PC-3 (cell line): ENCODE measurements at regions of chr11 and their contacts with region 1.

Region 1: GRCh38 chr11:86919557-86920210 is 35.5 kb downstream of the FZD4 start:
- DNase-seq: peak; percentile 88
- ATAC-seq: peak; percentile 48
- H3K4me3 ChIP-seq: no peak overlapping the region
- H3K27ac ChIP-seq: peak overlapping the region; percentile 29
- H3K4me1 ChIP-seq: peaks cover 35% of the 10 kb centered on the region
- H3K27me3 ChIP-seq: no peaks in the 10 kb centered on the region
- CTCF ChIP-seq: peak; percentile 94

Region 2: DNA sequence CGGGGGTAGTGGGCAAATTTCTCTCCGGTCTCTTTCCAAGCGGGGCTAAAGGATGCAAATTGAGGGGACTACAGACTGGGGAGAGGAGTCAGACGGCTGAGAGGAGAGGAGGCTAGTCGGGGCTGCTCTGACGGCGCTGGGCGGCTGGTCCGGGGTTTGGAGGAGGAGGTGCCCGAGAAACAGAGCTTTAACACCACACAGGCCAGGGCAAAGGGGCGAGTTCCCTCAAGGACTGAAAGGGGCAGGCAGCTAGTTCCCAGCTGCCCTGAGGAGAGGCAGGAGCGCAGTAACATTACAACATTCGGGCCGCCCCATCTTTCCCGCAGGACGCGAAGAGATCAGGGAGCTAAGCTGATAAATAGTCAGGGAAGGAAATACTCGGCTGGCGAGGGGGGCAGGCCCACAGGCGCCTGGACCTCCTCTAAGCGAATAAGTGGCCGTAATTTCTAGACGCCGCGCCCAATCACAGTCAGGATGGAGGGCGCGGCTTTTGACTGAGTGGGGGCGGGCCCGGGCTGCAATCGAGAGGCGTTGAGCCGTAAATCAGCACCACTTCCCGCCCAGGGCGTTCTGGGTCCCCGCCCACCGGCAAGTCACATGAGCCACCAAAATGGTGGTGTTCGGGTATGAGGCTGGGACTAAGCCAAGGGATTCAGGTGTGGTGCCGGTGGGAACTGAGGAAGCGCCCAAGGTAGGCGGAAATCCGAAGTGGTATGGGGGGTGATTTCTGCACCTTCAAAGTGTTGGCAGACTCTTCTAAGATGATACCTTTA is 1291.5 kb before region 1 on chr11 and contains the start of gene TMEM126B:
- CTCF ChIA-PET with region 1: no interaction called
- POLR2A ChIA-PET with region 1: no interaction called
- intact Hi-C with region 1: loop called (anchors 10 kb)
- DNase-seq: peak; percentile 99
- ATAC-seq: peak; percentile 97
- H3K4me3 ChIP-seq: peak within 1 kb of the TSS; percentile 83
- H3K27ac ChIP-seq: peak within 1 kb of the TSS; percentile 30
- H3K4me1 ChIP-seq: peaks cover 25% of the 10 kb centered on the region
- H3K27me3 ChIP-seq: no peaks in the 10 kb centered on the region
- CTCF ChIP-seq: no peak
- total RNA-seq, gene TMEM126B: 62.1 and 79.5 TPM in 2 replicates

Region 3: GRCh38 chr11:85694386-85694980 is 1225.2 kb before region 1 on chr11:
- CTCF ChIA-PET with region 1: no interaction called
- POLR2A ChIA-PET with region 1: no interaction called
- intact Hi-C with region 1: loop called (anchors 2 kb)
- DNase-seq: peak; percentile 87
- ATAC-seq: peak; percentile 59
- H3K4me3 ChIP-seq: no peak overlapping the region
- H3K27ac ChIP-seq: peak overlapping the region; percentile 10; the same call in 1 of the 2 replicates
- H3K4me1 ChIP-seq: peaks cover 34% of the 10 kb centered on the region
- H3K27me3 ChIP-seq: no peaks in the 10 kb centered on the region
- CTCF ChIP-seq: peak; percentile 94

Region 4: DNA sequence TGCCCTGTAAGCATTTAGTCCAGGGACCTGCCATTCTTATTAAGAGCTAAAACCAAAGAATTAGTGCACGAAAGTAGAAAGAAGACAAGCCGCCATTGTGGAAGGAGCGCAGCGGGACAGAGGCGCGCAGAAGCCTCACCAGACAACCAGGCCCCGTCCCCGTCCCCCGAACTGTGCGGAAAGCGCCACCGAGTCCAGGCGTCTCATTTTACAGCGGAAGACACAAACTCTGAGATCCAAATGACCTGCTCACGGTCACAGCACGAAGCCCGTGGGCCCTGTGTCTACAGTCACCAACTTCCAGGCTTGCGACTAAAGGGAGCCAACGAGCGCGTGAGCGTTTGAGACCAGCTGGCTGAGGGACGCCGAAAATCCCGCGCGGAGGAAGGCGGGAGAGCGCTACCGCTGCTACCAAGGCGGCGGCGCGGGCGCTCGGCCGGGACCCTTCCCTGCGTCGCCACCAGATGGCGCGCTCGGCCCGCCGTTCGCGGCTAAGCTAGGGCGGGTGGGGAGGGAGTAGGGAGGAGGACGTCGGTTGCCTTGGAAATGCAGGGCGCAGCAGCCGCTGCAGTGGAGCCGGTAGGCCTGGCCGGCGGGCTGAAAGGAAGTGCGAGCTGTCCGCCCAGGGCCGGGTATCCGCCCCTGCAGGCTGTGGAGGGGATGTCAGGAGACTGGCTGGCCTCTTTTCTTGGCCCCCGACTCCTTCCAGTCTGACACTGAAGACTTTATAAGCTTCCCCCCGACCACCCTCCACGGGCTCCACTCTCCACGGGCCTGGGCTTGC is 1064.9 kb before region 1 on chr11:
- CTCF ChIA-PET with region 1: interaction called, 15 read pairs
- POLR2A ChIA-PET with region 1: no interaction called
- intact Hi-C with region 1: loop called (anchors 1 kb)
- DNase-seq: peak; percentile 99
- ATAC-seq: peak; percentile 94
- H3K4me3 ChIP-seq: peak overlapping the region; percentile 78
- H3K27ac ChIP-seq: peak overlapping the region; percentile 84
- H3K4me1 ChIP-seq: peaks cover 17% of the 10 kb centered on the region
- H3K27me3 ChIP-seq: no peaks in the 10 kb centered on the region
- CTCF ChIP-seq: peak; percentile 68

Region 5: GRCh38 chr11:86869966-86870570 is 49.6 kb before region 1 on chr11:
- CTCF ChIA-PET with region 1: interaction called, 3 read pairs
- POLR2A ChIA-PET with region 1: interaction called, 7 read pairs
- intact Hi-C with region 1: loop called (anchors 1 kb)
- DNase-seq: peak; percentile 58
- ATAC-seq: peak; percentile 80
- H3K4me3 ChIP-seq: no peak overlapping the region
- H3K27ac ChIP-seq: no peak overlapping the region
- H3K4me1 ChIP-seq: no peaks in the 10 kb centered on the region; the same call in 1 of the 2 replicates
- H3K27me3 ChIP-seq: no peaks in the 10 kb centered on the region
- CTCF ChIP-seq: peak; percentile 76

Region 6: GRCh38 chr11:86949995-86950660 is 30.4 kb after region 1 on chr11:
- CTCF ChIA-PET with region 1: no interaction called
- POLR2A ChIA-PET with region 1: interaction called, 15 read pairs
- intact Hi-C with region 1: no loop called
- DNase-seq: peak; percentile 24
- ATAC-seq: no peak
- H3K4me3 ChIP-seq: peak overlapping the region; percentile 1; the same call in 1 of the 2 replicates
- H3K27ac ChIP-seq: peak overlapping the region; percentile 0; the same call in 1 of the 2 replicates
- H3K4me1 ChIP-seq: peaks cover 41% of the 10 kb centered on the region
- H3K27me3 ChIP-seq: no peaks in the 10 kb centered on the region
- CTCF ChIP-seq: no peak

Region 7: GRCh38 chr11:86969258-86969657 is 49.6 kb after region 1 on chr11:
- CTCF ChIA-PET with region 1: no interaction called
- POLR2A ChIA-PET with region 1: no interaction called
- intact Hi-C with region 1: no loop called
- DNase-seq: no peak
- ATAC-seq: no peak
- H3K4me3 ChIP-seq: no peak overlapping the region
- H3K27ac ChIP-seq: no peak overlapping the region
- H3K4me1 ChIP-seq: no peaks in the 10 kb centered on the region
- H3K27me3 ChIP-seq: no peaks in the 10 kb centered on the region
- CTCF ChIP-seq: no peak